Activated CD8-positive, alpha-beta memory T cell treated with anti-CD3 and anti-CD28 coated beads, Interleukin-2, amount 10 ng/mL, durations not matched to agents 7 days and 5 days (primary cell): ENCODE measurements at regions of chr1 and their contacts with region 1.

Region 1: DNA sequence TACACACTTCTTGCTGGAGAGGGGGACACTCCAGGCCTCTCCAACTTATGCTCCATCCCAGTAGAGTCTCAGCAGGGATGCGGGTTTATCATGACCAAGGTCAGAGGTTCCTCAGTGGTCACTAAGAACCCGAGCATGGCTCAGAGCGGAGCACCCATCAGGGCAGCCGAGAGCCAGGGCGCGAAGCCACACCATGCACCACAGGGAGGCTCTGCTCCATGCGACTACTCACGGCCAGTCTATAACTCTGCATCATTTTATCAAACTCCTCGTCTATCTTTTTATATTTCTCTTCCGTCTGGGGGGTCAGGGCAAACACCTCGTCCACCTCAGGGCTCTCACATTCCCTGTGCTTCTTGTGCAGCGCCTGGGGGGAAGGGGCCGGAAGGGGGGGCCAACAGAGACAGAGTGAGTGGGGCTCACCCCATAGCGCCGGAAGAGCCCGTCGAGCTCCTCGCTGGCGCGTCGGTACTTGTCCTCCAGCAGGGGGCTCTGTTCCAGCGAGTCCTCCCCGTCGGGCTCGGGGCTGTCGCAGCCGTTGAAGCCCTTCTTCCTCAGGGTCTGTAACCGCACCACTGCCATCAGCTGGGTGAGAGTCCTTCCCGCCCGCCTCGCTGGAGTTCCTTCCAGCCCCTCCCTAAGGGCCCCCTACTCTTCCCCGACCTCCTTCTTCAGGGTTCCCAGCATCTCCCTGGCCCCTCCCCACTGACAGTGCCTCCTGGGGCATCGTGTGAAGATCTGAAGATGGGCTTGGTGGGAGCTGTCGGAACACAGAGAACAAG is 20.0 kb downstream of the MEF2D start:
- DNase-seq: peak; percentile 88
- ATAC-seq: peak; percentile 89
- H3K4me3 Mint-ChIP-seq: peak overlapping the region; percentile 42
- H3K27ac Mint-ChIP-seq: peak overlapping the region; percentile 72
- H3K4me1 Mint-ChIP-seq: peaks cover 71% of the 10 kb centered on the region
- H3K27me3 Mint-ChIP-seq: no peaks in the 10 kb centered on the region

Region 2: GRCh38 chr1:156338180-156338973 is 142.2 kb before region 1 on chr1 and contains the starts of genes CCT3 and TSACC:
- CTCF ChIA-PET with region 1: no interaction called
- DNase-seq: peak; percentile 99
- ATAC-seq: peak; percentile 95
- H3K4me3 Mint-ChIP-seq: peak within 1 kb of the TSS; percentile 95
- H3K27ac Mint-ChIP-seq: peak within 1 kb of the TSS; percentile 89
- H3K4me1 Mint-ChIP-seq: peaks cover 30% of the 10 kb centered on the region
- H3K27me3 Mint-ChIP-seq: peaks cover 10% of the 10 kb centered on the region
- total RNA-seq, gene CCT3: 253 to 361 TPM
- total RNA-seq, gene TSACC: not detected

Region 3: DNA sequence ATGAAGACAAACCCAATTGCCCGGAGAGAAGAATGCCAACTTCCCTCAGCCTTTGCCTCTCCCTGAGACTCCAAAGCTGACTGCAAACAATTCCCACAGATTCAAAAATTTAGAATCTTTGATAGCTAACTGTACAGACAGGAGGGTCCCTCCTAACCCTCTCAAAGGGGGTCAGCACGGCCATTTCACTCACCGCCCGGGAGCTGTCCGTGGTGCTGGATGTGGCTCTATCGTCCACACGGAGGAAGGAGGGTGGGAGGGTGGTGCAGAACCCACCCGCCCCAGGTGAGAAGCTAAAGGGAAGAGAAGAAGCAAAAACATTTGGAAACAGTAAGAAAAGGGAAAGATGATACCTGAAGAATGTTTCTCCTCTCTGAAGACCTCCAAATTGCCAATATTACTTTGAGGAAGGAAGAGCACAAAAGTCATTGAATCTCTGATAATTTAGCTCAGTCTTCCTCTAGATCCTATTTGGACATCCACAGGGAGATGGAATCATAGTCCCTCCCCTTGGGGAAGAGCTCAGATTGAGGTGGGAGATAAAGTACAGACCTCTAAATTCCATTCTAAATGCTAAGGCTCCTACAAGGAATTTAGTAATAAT is 66.0 kb before region 1 on chr1:
- CTCF ChIA-PET with region 1: no interaction called
- DNase-seq: no peak
- ATAC-seq: no peak
- H3K4me3 Mint-ChIP-seq: no peak overlapping the region
- H3K27ac Mint-ChIP-seq: no peak overlapping the region
- H3K4me1 Mint-ChIP-seq: peaks cover under 1% of the 10 kb centered on the region
- H3K27me3 Mint-ChIP-seq: peaks cover 65% of the 10 kb centered on the region

Region 4: DNA sequence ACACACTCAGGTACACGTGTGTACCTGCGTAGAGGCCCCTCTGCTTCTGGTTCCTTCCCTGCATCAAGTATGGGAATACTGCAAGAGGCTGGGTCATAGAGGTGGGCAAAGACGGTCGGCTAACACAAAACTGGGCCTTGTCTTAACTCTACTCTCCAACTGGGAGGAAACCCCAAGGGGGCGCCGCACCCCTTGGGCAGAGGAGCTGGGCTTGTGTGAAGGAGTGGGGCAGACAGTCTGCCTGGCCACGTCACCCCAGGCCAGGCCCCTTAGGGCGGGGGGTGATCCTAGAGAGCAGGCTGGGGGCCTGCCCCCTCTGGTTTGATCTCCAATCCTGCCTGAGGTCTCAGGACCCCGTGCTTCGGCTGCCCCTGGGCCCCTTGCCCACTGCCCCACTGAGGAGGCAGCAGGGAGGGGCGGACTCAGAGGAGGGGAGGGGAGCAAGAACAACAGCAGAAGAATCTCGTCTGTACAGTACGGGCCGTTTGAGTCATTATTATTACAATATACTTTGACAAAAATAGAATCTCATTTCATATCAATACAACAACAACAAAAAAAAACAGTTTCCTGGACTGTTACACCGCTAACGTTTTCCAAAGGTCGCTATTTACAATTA is 14.7 kb before region 1 on chr1:
- CTCF ChIA-PET with region 1: interaction called, 24 read pairs
- DNase-seq: no peak
- ATAC-seq: no peak
- H3K4me3 Mint-ChIP-seq: no peak overlapping the region
- H3K27ac Mint-ChIP-seq: no peak overlapping the region
- H3K4me1 Mint-ChIP-seq: peaks cover 17% of the 10 kb centered on the region
- H3K27me3 Mint-ChIP-seq: no peaks in the 10 kb centered on the region

Region 5: GRCh38 chr1:156508163-156508887 is 27.7 kb after region 1 on chr1:
- CTCF ChIA-PET with region 1: interaction called, 372 read pairs
- DNase-seq: no peak
- ATAC-seq: no peak
- H3K4me3 Mint-ChIP-seq: peak overlapping the region; percentile 77
- H3K27ac Mint-ChIP-seq: peak overlapping the region; percentile 85
- H3K4me1 Mint-ChIP-seq: peaks cover 67% of the 10 kb centered on the region
- H3K27me3 Mint-ChIP-seq: no peaks in the 10 kb centered on the region

Region 6: DNA sequence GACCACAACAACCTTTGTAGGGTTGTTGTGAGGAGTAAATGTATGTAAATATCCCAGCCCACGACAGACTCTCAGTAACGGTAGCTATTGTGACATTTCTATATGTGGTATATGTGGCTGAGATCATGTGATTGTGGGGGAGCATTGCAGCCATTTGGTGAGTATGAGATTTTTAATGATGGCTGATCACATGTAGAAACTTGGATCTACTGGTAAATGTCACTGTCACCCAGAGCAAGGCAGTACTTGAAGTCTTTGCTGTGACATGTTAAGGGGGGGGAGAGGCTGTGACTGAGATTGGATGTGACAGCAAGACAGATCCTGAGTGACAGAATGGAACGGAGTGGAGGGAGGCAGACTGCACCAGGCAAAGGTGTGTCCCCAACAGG is 43.9 kb after region 1 on chr1:
- CTCF ChIA-PET with region 1: interaction called, 31 read pairs
- DNase-seq: peak; percentile 63
- ATAC-seq: peak; percentile 81
- H3K4me3 Mint-ChIP-seq: peak overlapping the region; percentile 14
- H3K27ac Mint-ChIP-seq: peak overlapping the region; percentile 86
- H3K4me1 Mint-ChIP-seq: peaks cover 44% of the 10 kb centered on the region
- H3K27me3 Mint-ChIP-seq: no peaks in the 10 kb centered on the region

Region 7: GRCh38 chr1:156583821-156584622 is 103.4 kb after region 1 on chr1:
- CTCF ChIA-PET with region 1: interaction called, 38 read pairs
- DNase-seq: peak; percentile 86
- ATAC-seq: peak; percentile 35
- H3K4me3 Mint-ChIP-seq: peak overlapping the region; percentile 82
- H3K27ac Mint-ChIP-seq: no peak overlapping the region
- H3K4me1 Mint-ChIP-seq: peaks cover 22% of the 10 kb centered on the region
- H3K27me3 Mint-ChIP-seq: no peaks in the 10 kb centered on the region

Region 8: DNA sequence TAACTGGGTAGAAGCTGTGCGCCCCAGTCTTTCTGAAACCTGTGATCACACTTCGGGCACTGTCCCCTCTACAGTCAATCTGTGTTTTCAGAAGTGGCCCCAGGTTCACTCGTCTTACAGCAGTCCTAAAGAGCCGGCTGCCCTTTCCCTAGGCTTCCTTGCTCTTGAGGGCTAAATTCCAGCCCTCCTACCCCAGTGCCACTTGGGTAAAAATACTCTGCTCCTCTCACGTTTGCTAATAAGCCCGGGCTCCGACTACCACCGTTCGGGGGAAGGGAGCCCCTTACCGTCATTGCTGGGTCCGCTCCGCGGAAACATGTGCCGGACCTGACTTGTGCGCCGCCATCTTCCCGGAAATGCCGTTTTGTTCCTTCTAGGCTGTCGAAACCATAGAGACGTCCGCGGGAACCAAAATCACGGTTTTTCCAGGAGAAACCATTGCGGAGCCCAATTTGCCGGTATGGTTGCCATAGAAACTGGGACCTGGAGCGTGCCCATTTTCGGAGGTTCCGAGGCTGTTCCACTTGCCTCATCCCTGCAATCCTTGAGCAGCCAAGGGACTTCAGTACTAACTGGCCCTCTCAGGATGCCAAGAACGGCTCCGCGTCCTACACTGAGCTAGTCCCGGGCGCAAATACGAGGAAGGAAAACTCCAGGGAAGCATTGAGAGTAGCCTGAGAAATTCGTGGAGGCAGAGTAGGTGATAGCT is 120.7 kb after region 1 on chr1 and contains the start of gene GPATCH4:
- CTCF ChIA-PET with region 1: interaction called, 15 read pairs
- DNase-seq: peak; percentile 94
- ATAC-seq: peak; percentile 85
- H3K4me3 Mint-ChIP-seq: peak within 1 kb of the TSS; percentile 99
- H3K27ac Mint-ChIP-seq: peak within 1 kb of the TSS; percentile 98
- H3K4me1 Mint-ChIP-seq: peaks cover 37% of the 10 kb centered on the region
- H3K27me3 Mint-ChIP-seq: no peaks in the 10 kb centered on the region
- total RNA-seq, gene GPATCH4: 40.5 to 50.9 TPM